ENCODE measurements at regions of chrX and their contacts with region 1.

Region 1: DNA sequence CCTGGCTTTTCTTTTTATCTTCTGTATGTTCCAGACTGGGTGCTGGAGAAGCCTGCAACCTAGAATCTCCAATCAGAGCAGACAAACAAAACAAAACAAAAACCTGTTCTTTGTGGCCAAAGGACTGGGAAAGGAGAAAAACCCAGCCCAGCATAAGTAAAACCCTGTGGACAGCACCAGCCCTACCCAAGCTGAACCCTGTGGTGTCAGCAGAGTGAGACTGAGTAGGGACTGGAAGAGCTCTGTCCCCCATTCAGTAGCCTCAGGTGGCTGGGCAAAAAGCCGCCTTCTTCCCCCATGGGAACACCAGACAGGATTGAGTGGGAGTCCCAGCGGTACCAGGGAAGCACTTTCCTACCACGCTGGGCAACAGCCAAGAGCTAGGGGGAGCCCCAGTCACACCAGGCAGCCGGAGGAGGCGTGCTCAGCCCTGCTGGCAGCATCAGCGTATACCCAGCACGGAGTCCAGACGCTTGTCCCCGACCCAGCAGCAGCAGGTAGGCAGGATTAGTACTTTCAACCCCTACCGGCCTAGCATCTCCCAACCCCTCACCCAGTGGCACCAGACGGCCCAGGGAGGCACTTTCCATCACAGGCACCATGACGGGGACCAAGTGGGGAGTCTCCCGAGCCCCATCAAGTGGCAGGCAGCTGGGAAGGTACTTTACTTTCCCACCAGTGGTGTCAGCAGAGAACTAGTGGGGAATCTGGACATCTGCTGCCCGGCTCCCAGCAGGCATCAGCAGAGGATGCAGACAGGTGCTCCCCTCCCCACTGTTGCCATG is 8.6 kb upstream of the JADE3 start:
- DNase-seq: peak; percentile 86
- ATAC-seq: peak; percentile 99

Region 2: DNA sequence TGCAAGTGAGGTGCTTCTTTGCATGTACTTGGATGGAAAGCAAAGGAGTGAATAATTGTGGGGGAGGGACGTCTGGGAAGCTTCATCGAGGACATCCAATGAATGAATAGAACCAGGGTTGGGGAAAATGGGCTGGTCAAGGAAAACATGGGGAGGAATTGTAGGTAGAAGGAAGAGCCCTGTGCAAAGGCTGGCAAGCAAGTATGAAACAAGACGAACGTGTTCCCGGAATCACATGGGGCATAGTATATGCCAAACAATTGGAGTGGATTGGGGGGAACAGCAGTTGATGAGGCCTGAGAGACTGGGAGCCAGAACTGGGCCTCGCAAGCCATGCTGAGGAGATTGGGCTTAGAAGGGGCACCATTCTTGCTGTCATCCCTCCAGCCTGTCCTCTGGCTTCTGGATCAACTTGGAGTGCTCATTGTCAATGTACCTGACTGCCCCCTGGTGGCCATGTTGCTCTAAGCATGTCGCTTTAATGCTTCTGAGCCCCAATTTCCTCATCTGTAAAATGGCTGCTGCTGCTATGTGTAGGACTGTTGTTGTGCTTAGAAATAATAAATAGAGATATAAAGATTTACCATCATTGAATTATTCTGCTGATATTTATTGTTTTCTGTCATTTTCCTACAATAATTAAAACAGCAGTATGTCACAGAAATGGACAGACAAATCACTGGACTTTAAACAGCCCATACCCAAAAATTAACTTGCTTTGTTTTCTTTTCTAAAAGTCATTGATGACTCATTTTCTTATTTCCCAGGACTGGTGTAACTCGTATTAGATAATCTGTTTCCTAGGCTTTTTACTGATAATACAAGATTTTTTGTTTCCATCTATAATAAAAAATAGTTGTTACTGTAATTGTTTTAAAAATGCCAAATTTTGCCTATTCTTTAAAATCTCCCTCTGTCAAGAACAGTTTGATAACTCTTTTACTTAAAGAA is 75.0 kb after region 1 on chrX:
- intact Hi-C with region 1: loop called (anchors 5 kb)
- DNase-seq: peak; percentile 81
- ATAC-seq: peak; percentile 57

Region 3: DNA sequence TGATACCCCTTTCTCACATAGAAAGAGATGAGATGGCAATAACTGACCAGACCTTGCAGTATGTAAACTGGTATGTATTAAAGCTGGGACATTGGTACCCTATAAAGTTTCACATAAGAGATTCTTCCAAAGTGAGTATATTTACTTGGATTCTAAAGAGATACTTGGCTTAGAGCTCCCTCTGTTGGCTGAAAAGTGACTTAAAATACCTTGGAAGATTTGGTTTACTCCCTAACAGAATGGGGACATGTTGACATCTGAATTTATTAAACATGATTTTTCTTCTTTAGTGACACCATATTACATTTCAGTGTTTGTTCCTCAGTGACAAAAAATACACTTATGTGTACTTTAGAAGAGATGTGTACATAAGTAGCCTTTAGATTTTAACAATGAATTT is 126.7 kb after region 1 on chrX:
- intact Hi-C with region 1: loop called (anchors 10 kb)
- DNase-seq: no peak
- ATAC-seq: no peak

Measured in left ventricle myocardium superior (tissue), 1 donor.